ENCODE measurements at regions of chr6 and their contacts with region 1.

Region 1: GRCh38 chr6:13574149-13574570 is 241 bp upstream of the SIRT5 start:
- DNase-seq: peak; percentile 82
- ATAC-seq: peak; percentile 89
- H3K4me3 ChIP-seq: peak overlapping the region; percentile 93
- H3K27ac ChIP-seq: peak overlapping the region; percentile 96
- H3K4me1 ChIP-seq: peaks cover 4% of the 10 kb centered on the region
- H3K27me3 ChIP-seq: no peaks in the 10 kb centered on the region
- CTCF ChIP-seq: peak; percentile 41 to 63 (median 50); a peak in 4 of 6 replicates
- EP300 ChIP-seq: peak in 1 of 2 experiments; percentile 45; a peak in 1 of 4 replicates
- POLR2A ChIP-seq: peak; percentile 72; the same call in 1 of the 2 replicates
- RAD21 ChIP-seq: peak; percentile 46; the same call in 1 of the 2 replicates

Region 2: DNA sequence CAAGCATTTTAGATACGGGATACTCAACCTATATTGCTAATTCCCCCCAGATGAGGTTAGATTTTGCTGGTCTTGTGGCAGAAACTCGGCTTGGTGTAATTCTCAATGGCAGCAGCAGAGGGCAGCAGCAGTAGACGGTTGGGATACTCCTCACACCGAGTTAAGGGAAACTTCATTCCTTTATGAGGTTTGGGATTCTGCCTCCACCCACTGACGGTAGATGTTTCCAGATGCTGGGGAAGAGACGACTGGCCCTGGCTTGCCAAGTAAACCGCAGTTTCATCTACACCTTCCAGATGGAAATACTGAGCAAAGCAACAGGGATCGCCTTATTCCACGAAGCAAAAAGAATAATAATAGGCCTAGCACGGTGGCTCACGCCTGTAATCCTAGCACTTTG is 237.6 kb before region 1 on chr6:
- CTCF ChIA-PET with region 1: interaction called, 52 read pairs
- POLR2A ChIA-PET with region 1: interaction called, 4 read pairs
- RAD21 ChIA-PET with region 1: interaction called, 30 read pairs
- SMC1A ChIA-PET with region 1: interaction called, 30 read pairs
- in situ Hi-C with region 1: no loop called
- intact Hi-C with region 1: loop called (anchors 1 kb)
- DNase-seq: no peak
- ATAC-seq: peak; percentile 82
- H3K4me3 ChIP-seq: no peak overlapping the region
- H3K27ac ChIP-seq: no peak overlapping the region
- H3K4me1 ChIP-seq: peaks cover 15% of the 10 kb centered on the region; the same call in 1 of the 2 replicates
- H3K27me3 ChIP-seq: no peaks in the 10 kb centered on the region
- CTCF ChIP-seq: peak; percentile 90 to 95 (median 94); a peak in 5 of 6 replicates
- EP300 ChIP-seq: no peak
- POLR2A ChIP-seq: no peak
- RAD21 ChIP-seq: peak; percentile 98

Region 3: GRCh38 chr6:13375360-13375878 is 198.7 kb before region 1 on chr6:
- CTCF ChIA-PET with region 1: interaction called, 14 read pairs
- POLR2A ChIA-PET with region 1: interaction called, 6 read pairs
- RAD21 ChIA-PET with region 1: interaction called, 11 read pairs
- SMC1A ChIA-PET with region 1: interaction called, 6 read pairs
- in situ Hi-C with region 1: no loop called
- intact Hi-C with region 1: no loop called
- DNase-seq: peak; percentile 95
- ATAC-seq: peak; percentile 88
- H3K4me3 ChIP-seq: no peak overlapping the region
- H3K27ac ChIP-seq: peak overlapping the region; percentile 98
- H3K4me1 ChIP-seq: peaks cover 65% of the 10 kb centered on the region
- H3K27me3 ChIP-seq: no peaks in the 10 kb centered on the region
- CTCF ChIP-seq: no peak
- EP300 ChIP-seq: peak; percentile 72 to 82; a peak in 3 of 4 replicates
- POLR2A ChIP-seq: peak; percentile 38; the same call in 1 of the 2 replicates
- RAD21 ChIP-seq: no peak

Region 4: GRCh38 chr6:13454286-13455221 is 119.6 kb before region 1 on chr6:
- CTCF ChIA-PET with region 1: interaction called, 30 read pairs
- POLR2A ChIA-PET with region 1: interaction called, 6 read pairs
- RAD21 ChIA-PET with region 1: interaction called, 42 read pairs
- SMC1A ChIA-PET with region 1: interaction called, 15 read pairs
- in situ Hi-C with region 1: no loop called
- intact Hi-C with region 1: loop called (anchors 1 kb)
- DNase-seq: peak; percentile 56
- ATAC-seq: peak; percentile 74
- H3K4me3 ChIP-seq: no peak overlapping the region
- H3K27ac ChIP-seq: peak overlapping the region; percentile 71
- H3K4me1 ChIP-seq: peaks cover 48% of the 10 kb centered on the region
- H3K27me3 ChIP-seq: no peaks in the 10 kb centered on the region
- CTCF ChIP-seq: peak; percentile 27 to 58 (median 33); a peak in 3 of 6 replicates
- EP300 ChIP-seq: no peak
- POLR2A ChIP-seq: peak; percentile 51
- RAD21 ChIP-seq: peak; percentile 64

Region 5: GRCh38 chr6:13538084-13538483 is 36.1 kb before region 1 on chr6:
- CTCF ChIA-PET with region 1: interaction called, 12 read pairs
- POLR2A ChIA-PET with region 1: no interaction called
- RAD21 ChIA-PET with region 1: interaction called, 9 read pairs
- SMC1A ChIA-PET with region 1: interaction called, 15 read pairs
- in situ Hi-C with region 1: no loop called
- intact Hi-C with region 1: no loop called
- DNase-seq: no peak
- ATAC-seq: peak; percentile 80
- H3K4me3 ChIP-seq: no peak overlapping the region
- H3K27ac ChIP-seq: no peak overlapping the region
- H3K4me1 ChIP-seq: no peaks in the 10 kb centered on the region
- H3K27me3 ChIP-seq: no peaks in the 10 kb centered on the region
- CTCF ChIP-seq: peak; percentile 27 to 49 (median 36); a peak in 4 of 6 replicates
- EP300 ChIP-seq: no peak
- POLR2A ChIP-seq: no peak
- RAD21 ChIP-seq: peak; percentile 61

Region 6: DNA sequence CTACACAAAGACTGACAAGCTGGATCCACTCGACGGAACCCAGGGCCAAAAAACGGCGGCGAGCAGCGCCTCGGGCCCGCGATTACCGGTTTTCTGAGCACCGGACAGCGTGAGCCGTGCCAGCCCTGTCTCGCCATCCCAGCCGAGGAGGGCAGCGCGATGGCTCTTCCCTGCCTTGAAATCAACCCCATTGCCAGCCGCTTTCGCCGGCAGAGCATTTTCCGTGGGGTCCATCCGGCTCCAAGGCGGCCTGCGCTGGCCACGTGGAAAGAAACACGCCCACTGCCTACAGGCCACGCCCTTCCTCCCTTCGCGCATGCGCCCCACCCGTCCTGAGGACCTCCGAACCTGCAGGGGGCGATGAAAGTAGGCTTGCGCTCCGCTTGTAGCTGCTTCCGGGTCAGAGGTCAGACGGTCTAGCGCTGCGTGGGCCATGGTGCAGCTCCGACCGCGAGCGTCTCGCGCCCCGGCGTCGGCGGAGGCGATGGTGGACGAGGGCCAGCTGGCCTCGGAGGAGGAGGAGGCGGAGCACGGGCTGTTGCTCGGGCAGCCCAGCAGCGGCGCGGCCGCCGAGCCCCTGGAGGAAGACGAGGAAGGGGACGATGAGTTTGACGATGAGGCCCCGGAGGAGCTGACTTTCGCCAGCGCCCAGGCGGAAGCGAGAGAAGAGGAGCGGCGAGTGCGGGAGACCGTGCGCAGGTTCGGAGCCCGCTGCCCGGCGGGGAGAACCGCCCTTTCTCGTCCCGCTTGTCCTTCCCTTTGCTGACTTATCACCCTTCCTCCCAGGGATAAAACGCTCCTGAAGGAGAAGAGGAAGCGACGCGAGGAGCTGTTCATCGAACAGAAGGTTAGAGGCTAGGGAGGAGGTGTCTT is 41.0 kb after region 1 on chr6 and contains the start of gene NOL7:
- CTCF ChIA-PET with region 1: interaction called, 22 read pairs
- POLR2A ChIA-PET with region 1: interaction called, 11 read pairs
- RAD21 ChIA-PET with region 1: interaction called, 22 read pairs
- SMC1A ChIA-PET with region 1: interaction called, 14 read pairs
- in situ Hi-C with region 1: no loop called
- intact Hi-C with region 1: loop called (anchors 2 kb)
- DNase-seq: peak; percentile 95
- ATAC-seq: peak; percentile 91
- H3K4me3 ChIP-seq: peak within 1 kb of the TSS; percentile 94
- H3K27ac ChIP-seq: peak within 1 kb of the TSS; percentile 96
- H3K4me1 ChIP-seq: peaks cover 17% of the 10 kb centered on the region
- H3K27me3 ChIP-seq: no peaks in the 10 kb centered on the region
- CTCF ChIP-seq: peak; percentile 96 to 99 (median 98); a peak in 5 of 6 replicates
- EP300 ChIP-seq: no peak
- POLR2A ChIP-seq: peak; percentile 99
- RAD21 ChIP-seq: no peak
- polyA plus RNA-seq, gene NOL7: 12.2 to 31.2 TPM

Region 7: DNA sequence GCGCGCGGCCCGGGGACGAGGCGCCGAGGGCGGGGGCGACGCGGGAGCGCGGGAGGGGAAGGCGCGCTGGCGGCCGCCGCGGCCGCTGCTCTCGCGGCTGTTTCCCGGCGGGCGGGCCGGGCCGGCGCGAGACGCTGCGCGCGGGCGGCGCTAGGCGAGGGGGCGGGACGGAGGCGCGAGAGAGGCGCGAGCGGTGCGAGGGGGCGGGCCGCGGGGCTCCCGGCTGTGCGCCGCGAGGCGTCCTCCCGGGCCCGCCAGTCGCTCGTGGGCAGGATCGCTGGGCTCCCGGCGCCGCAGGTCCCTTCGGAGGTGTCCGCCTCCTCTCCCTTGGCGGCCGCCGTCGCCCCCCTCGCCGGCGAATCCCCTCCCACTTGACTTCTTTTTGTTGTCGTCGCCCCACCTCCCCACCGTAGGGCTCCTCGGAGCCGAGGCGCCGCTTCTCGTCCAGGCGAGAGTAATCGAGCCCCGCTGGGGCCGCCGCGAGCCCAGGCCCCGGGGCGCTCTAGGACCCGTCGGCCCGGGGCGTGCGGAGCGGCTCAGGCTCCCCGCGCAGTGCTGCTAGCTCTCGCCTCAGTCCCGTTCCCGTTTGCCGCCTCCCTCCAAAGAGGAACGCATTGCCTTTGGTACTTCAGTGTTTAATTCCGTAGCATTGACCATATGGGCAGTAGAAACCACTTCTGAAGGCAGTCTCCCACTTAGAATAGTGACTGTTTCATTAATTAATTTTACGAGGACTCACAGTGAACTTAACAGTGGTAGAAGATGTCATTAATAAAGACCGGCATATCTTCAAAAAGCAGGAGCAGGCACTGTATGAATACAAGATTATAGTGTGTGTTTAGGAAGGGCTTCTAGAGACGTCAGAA is 137.8 kb after region 1 on chr6 and contains the start of gene RANBP9:
- CTCF ChIA-PET with region 1: interaction called, 7 read pairs
- POLR2A ChIA-PET with region 1: no interaction called
- RAD21 ChIA-PET with region 1: interaction called, 10 read pairs
- SMC1A ChIA-PET with region 1: interaction called, 3 read pairs
- in situ Hi-C with region 1: no loop called
- intact Hi-C with region 1: no loop called
- DNase-seq: peak; percentile 43
- ATAC-seq: peak; percentile 88
- H3K4me3 ChIP-seq: peak within 1 kb of the TSS; percentile 96
- H3K27ac ChIP-seq: peak within 1 kb of the TSS; percentile 87
- H3K4me1 ChIP-seq: no peaks in the 10 kb centered on the region
- H3K27me3 ChIP-seq: no peaks in the 10 kb centered on the region
- CTCF ChIP-seq: no peak
- EP300 ChIP-seq: peak in 1 of 2 experiments; percentile 3; a peak in 1 of 4 replicates
- POLR2A ChIP-seq: peak; percentile 87
- RAD21 ChIP-seq: 0 out of 2 replicates have a peak, but pooled peaks have one; percentile 1
- polyA plus RNA-seq, gene RANBP9: 8.2 to 10.8 TPM

Measured in GM12878 (cell line).